CD8-positive, alpha-beta T cell (primary cell): ENCODE measurements at regions of chr10 and their contacts with region 1.

Region 1: DNA sequence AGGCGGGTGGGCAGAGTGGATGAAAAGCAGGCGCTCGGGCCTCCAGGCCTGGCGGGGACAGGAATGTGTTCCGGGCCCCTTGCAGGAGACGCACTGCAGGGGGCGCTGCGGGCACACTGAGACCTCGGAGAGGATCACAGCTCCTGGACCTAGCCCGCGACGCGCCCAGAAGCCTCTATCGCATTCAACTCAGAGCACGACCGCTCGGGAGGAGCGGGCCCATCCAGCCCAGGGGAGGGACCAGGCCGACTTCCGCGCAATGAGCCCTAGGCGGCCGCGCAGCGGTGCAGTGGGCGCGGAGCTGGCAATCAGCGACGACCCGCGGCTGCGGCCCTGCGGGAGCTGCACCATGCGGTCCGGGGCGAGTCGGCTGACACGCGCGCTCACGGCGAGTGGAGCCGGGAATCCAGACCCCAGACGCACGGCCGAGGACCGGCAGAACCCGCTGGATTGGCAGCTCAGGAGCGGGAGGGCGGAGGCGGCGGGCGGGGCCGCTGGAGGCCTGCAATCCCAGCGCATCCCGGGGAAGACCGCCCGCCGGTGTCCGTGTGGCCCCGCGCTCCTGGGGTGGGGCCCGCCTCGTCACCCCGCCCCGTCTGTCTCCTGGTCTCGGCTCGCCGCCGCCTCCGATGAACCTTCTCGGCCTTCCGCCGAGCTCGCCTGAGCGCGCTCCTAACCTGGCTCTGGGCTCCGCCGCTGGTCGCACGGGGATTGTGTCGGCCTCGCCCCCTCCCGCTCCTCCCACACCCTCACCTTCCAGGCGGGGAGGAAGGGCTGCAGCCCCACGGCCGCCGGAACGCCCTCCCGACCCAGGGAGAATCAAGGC is 33.5 kb upstream of the GRID1 start:
- DNase-seq: peak; percentile 87 to 97 (median 94)
- ATAC-seq: peak; percentile 78
- H3K4me3 ChIP-seq: peak overlapping the region; percentile 69 to 89
- H3K4me3 Mint-ChIP-seq: peak overlapping the region; percentile 91
- H3K27ac ChIP-seq: peak overlapping the region; percentile 56 to 66
- H3K27ac Mint-ChIP-seq: peak overlapping the region; percentile 90
- H3K4me1 ChIP-seq: peaks cover 13% of the 10 kb centered on the region
- H3K4me1 Mint-ChIP-seq: peaks cover 23% of the 10 kb centered on the region
- H3K27me3 ChIP-seq: peaks cover 0 to 2% of the 10 kb centered on the region in 2 experiments
- H3K27me3 Mint-ChIP-seq: no peaks in the 10 kb centered on the region
- CTCF ChIP-seq: peak; percentile 92

Region 2: GRCh38 chr10:86110156-86110786 is 289.8 kb before region 1 on chr10:
- CTCF ChIA-PET with region 1: no interaction called
- POLR2A ChIA-PET with region 1: no interaction called
- intact Hi-C with region 1: no loop called
- DNase-seq: no peak
- ATAC-seq: no peak
- H3K4me3 ChIP-seq: no peak overlapping the region
- H3K4me3 Mint-ChIP-seq: no peak overlapping the region
- H3K27ac ChIP-seq: no peak overlapping the region
- H3K27ac Mint-ChIP-seq: no peak overlapping the region
- H3K4me1 ChIP-seq: no peaks in the 10 kb centered on the region
- H3K4me1 Mint-ChIP-seq: no peaks in the 10 kb centered on the region
- H3K27me3 ChIP-seq: no peaks in the 10 kb centered on the region
- H3K27me3 Mint-ChIP-seq: peaks cover 2% of the 10 kb centered on the region
- CTCF ChIP-seq: no peak

Region 3: GRCh38 chr10:86411281-86411841 is 11.3 kb after region 1 on chr10:
- CTCF ChIA-PET with region 1: interaction called, 61 read pairs
- POLR2A ChIA-PET with region 1: interaction called, 56 read pairs
- intact Hi-C with region 1: loop called in 1 of 2 experiments (anchors 1 kb)
- DNase-seq: peak in 6 of 9 experiments; percentile 14 to 64 (median 31)
- ATAC-seq: peak; percentile 54
- H3K4me3 ChIP-seq: no peak overlapping the region
- H3K4me3 Mint-ChIP-seq: peak overlapping the region; percentile 74
- H3K27ac ChIP-seq: peak overlapping the region; percentile 6 to 64
- H3K27ac Mint-ChIP-seq: peak overlapping the region; percentile 83
- H3K4me1 ChIP-seq: peaks cover 51% of the 10 kb centered on the region
- H3K4me1 Mint-ChIP-seq: peaks cover 51% of the 10 kb centered on the region
- H3K27me3 ChIP-seq: no peaks in the 10 kb centered on the region
- H3K27me3 Mint-ChIP-seq: no peaks in the 10 kb centered on the region
- CTCF ChIP-seq: no peak

Region 4: GRCh38 chr10:86535057-86535882 is 135.2 kb after region 1 on chr10:
- CTCF ChIA-PET with region 1: interaction called, 8 read pairs
- POLR2A ChIA-PET with region 1: interaction called, 12 read pairs
- intact Hi-C with region 1: loop called in 1 of 2 experiments (anchors 1 kb)
- DNase-seq: peak in 5 of 9 experiments; percentile 13 to 58 (median 37)
- ATAC-seq: no peak
- H3K4me3 ChIP-seq: peak overlapping the region in 1 of 2 experiments; percentile 32
- H3K4me3 Mint-ChIP-seq: peak overlapping the region; percentile 62
- H3K27ac ChIP-seq: no peak overlapping the region
- H3K27ac Mint-ChIP-seq: peak overlapping the region; percentile 64
- H3K4me1 ChIP-seq: peaks cover 22% of the 10 kb centered on the region
- H3K4me1 Mint-ChIP-seq: peaks cover 33% of the 10 kb centered on the region
- H3K27me3 ChIP-seq: no peaks in the 10 kb centered on the region
- H3K27me3 Mint-ChIP-seq: no peaks in the 10 kb centered on the region
- CTCF ChIP-seq: no peak

Region 5: GRCh38 chr10:86710987-86711512 is 311.0 kb after region 1 on chr10:
- CTCF ChIA-PET with region 1: no interaction called
- POLR2A ChIA-PET with region 1: interaction called, 3 read pairs
- intact Hi-C with region 1: loop called (anchors 5 to 10 kb)
- DNase-seq: peak; percentile 74 to 92 (median 82)
- ATAC-seq: peak; percentile 91
- H3K4me3 ChIP-seq: peak overlapping the region; percentile 48 to 66
- H3K4me3 Mint-ChIP-seq: peak overlapping the region; percentile 88
- H3K27ac ChIP-seq: peak overlapping the region; percentile 74 to 81
- H3K27ac Mint-ChIP-seq: peak overlapping the region; percentile 96
- H3K4me1 ChIP-seq: peaks cover 15% of the 10 kb centered on the region
- H3K4me1 Mint-ChIP-seq: peaks cover 13% of the 10 kb centered on the region
- H3K27me3 ChIP-seq: no peaks in the 10 kb centered on the region
- H3K27me3 Mint-ChIP-seq: no peaks in the 10 kb centered on the region
- CTCF ChIP-seq: peak; percentile 67

Region 6: GRCh38 chr10:86971232-86971991 is 571.3 kb after region 1 on chr10:
- CTCF ChIA-PET with region 1: no interaction called
- POLR2A ChIA-PET with region 1: no interaction called
- intact Hi-C with region 1: loop called in 1 of 2 experiments (anchors 2 kb)
- DNase-seq: peak; percentile 87 to 95 (median 91)
- ATAC-seq: peak; percentile 86
- H3K4me3 ChIP-seq: peak overlapping the region; percentile 61 to 66
- H3K4me3 Mint-ChIP-seq: peak overlapping the region; percentile 78
- H3K27ac ChIP-seq: peak overlapping the region; percentile 80 to 89
- H3K27ac Mint-ChIP-seq: peak overlapping the region; percentile 91
- H3K4me1 ChIP-seq: peaks cover 50% of the 10 kb centered on the region
- H3K4me1 Mint-ChIP-seq: peaks cover 31% of the 10 kb centered on the region
- H3K27me3 ChIP-seq: no peaks in the 10 kb centered on the region
- H3K27me3 Mint-ChIP-seq: no peaks in the 10 kb centered on the region
- CTCF ChIP-seq: no peak